ENCODE measurements at regions of chr2 and their contacts with region 1.

Region 1: DNA sequence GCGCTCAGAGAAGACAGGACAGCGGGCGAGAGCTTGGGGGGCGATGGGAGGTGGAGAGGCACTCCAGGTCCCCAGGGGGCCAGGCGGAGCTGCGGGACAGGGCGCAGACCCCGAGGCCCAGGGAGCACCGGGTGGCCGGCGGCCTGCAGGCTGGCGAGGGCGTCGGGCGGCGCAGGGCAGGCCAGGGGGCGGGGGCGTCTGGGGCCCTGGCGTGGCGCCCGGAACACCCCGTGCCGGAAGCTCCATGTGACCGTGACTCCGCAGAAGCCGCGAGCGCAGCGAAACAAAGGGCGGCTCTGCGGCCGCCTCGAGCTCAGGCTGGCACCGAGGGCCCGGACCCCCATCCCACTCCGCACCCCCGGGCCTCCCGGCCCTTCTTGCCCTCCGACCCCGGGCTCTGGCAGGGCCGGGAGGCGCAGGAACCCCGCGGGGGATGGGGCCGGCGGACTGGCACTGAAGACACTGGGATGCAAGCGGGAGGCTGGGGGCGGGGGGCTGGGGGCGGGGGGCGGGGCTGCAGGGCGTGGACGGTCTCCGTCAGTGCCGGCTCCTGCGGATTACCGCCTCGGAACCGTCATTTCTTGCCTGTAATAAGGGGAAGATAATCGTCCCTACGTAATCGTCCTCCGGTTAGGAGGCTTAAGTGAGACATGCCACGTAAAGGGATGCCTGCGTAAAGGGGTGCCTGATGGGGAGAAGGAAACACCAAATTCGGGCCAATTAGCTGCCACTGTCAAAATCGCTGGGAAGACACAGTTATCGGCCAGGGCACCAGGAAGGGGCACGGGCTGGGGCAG is 19.2 kb downstream of the SH2D6 start:
- DNase-seq: peak; percentile 65
- ATAC-seq: peak; percentile 41
- H3K4me3 Mint-ChIP-seq: peak overlapping the region; percentile 73
- H3K27ac Mint-ChIP-seq: peak overlapping the region; percentile 90; the same call in 1 of the 2 replicates
- H3K4me1 Mint-ChIP-seq: peaks cover 41% of the 10 kb centered on the region
- H3K27me3 Mint-ChIP-seq: peaks cover 15% of the 10 kb centered on the region
- CTCF ChIP-seq: no peak

Region 2: GRCh38 chr2:85455552-85456090 is 17.9 kb after region 1 on chr2:
- CTCF ChIA-PET with region 1: interaction called, 11 read pairs
- POLR2A ChIA-PET with region 1: interaction called, 6 read pairs
- DNase-seq: peak; percentile 38
- ATAC-seq: peak; percentile 75
- H3K4me3 Mint-ChIP-seq: no peak overlapping the region
- H3K27ac Mint-ChIP-seq: no peak overlapping the region
- H3K4me1 Mint-ChIP-seq: peaks cover 47% of the 10 kb centered on the region
- H3K27me3 Mint-ChIP-seq: peaks cover 35% of the 10 kb centered on the region
- CTCF ChIP-seq: no peak

Region 3: GRCh38 chr2:85682378-85682777 is 244.7 kb after region 1 on chr2:
- CTCF ChIA-PET with region 1: no interaction called
- POLR2A ChIA-PET with region 1: no interaction called
- DNase-seq: no peak
- ATAC-seq: no peak
- H3K4me3 Mint-ChIP-seq: no peak overlapping the region
- H3K27ac Mint-ChIP-seq: no peak overlapping the region
- H3K4me1 Mint-ChIP-seq: peaks cover 11% of the 10 kb centered on the region
- H3K27me3 Mint-ChIP-seq: peaks cover 7% of the 10 kb centered on the region
- CTCF ChIP-seq: no peak

Measured in WTC11 (cell line).